Activated CD8-positive, alpha-beta T cell treated with anti-CD3 and anti-CD28 coated beads for 36 hours (primary cell): ENCODE measurements at regions of chr10 and their contacts with region 1.

Region 1: DNA sequence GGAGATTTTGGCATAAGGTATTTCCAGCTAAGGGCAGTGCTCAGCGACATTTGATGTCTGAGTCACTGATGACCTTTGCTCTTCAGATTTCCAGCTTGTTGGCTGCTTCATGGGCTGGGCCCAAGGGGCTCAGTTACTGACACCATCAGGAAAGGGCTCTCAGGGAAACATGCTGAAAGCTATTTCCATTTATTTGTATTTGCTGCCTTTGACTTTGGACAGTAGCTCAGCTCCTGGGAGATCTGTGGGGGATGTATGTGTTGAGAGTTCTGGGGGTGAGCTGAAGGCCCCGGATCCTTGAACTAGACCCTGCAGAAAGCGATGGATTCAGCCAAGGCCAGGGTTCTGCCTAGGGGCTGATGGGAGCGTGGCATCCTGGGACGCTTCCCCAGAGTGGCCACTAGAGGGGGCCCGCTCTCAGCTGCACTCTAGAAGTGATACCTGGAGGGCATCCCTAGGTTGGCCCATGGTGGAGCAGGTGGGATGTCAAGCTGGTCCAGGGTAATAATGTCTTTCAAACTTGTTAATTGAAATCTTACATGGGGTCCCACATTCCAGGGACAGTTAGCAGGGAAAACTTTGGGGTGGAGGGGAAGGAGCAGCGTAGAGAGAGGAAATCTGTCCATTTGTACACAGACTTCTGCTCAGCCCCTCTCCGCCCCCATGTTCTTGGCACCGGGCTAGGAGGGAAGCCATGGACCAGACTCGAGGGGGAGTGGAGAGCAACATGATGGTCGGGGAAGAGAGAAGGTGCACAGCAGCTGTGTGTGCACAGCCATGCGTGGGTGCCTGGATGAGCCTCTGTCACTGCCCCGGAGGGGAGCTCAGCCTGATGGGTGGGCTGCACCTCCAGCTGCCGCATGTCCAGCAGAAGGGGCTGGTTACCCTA is 3.0 kb upstream of the BTBD16 start:
- DNase-seq: peak; percentile 61
- ATAC-seq: peak; percentile 87
- H3K4me3 Mint-ChIP-seq: no peak overlapping the region
- H3K27ac Mint-ChIP-seq: no peak overlapping the region
- H3K4me1 Mint-ChIP-seq: no peaks in the 10 kb centered on the region
- H3K27me3 Mint-ChIP-seq: peaks cover 10% of the 10 kb centered on the region
- CTCF ChIP-seq: peak; percentile 82

Region 2: GRCh38 chr10:122239578-122240257 is 28.4 kb before region 1 on chr10:
- CTCF ChIA-PET with region 1: no interaction called
- POLR2A ChIA-PET with region 1: no interaction called
- intact Hi-C with region 1: no loop called
- DNase-seq: no peak
- ATAC-seq: no peak
- H3K4me3 Mint-ChIP-seq: no peak overlapping the region
- H3K27ac Mint-ChIP-seq: no peak overlapping the region
- H3K4me1 Mint-ChIP-seq: no peaks in the 10 kb centered on the region
- H3K27me3 Mint-ChIP-seq: no peaks in the 10 kb centered on the region
- CTCF ChIP-seq: no peak

Region 3: GRCh38 chr10:122279725-122280141 is 11.6 kb after region 1 on chr10:
- CTCF ChIA-PET with region 1: interaction called, 17 read pairs
- POLR2A ChIA-PET with region 1: no interaction called
- intact Hi-C with region 1: no loop called
- DNase-seq: peak; percentile 45
- ATAC-seq: no peak
- H3K4me3 Mint-ChIP-seq: no peak overlapping the region
- H3K27ac Mint-ChIP-seq: no peak overlapping the region
- H3K4me1 Mint-ChIP-seq: no peaks in the 10 kb centered on the region
- H3K27me3 Mint-ChIP-seq: peaks cover 9% of the 10 kb centered on the region
- CTCF ChIP-seq: no peak